ENCODE measurements at regions of chr10 and their contacts with region 1.

Region 1: DNA sequence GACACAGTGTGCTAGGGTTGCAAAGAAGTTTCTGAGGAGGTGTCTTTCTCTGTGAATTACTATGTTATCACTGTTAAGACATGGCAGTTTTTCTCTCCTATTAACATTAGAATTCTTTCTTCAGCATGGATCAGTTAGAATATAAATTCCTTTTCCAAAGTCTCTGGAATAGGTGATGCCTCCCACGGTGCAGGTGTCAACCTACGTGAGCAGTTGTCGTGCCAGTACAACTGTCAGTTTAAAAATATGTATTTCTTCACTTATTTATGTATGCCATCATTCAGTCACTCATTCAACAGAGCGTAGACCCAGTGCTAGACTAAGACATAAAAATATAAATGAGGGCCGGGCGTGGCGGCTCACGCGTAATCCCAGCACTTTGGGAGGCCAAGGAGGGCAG is 83.5 kb downstream of the TACC2 start:
- DNase-seq: no peak
- ATAC-seq: no peak
- H3K4me3 ChIP-seq: no peak overlapping the region
- H3K27ac ChIP-seq: peak overlapping the region; percentile 55
- H3K4me1 ChIP-seq: peaks cover 32% of the 10 kb centered on the region
- H3K27me3 ChIP-seq: no peaks in the 10 kb centered on the region
- CTCF ChIP-seq: no peak

Region 2: GRCh38 chr10:121823993-121824463 is 248.5 kb before region 1 on chr10:
- intact Hi-C with region 1: loop called in 1 of 2 experiments (anchors 5 kb)
- DNase-seq: no peak
- ATAC-seq: peak; percentile 72 to 91 (median 78)
- H3K4me3 ChIP-seq: no peak overlapping the region
- H3K27ac ChIP-seq: no peak overlapping the region
- H3K4me1 ChIP-seq: no peaks in the 10 kb centered on the region
- H3K27me3 ChIP-seq: no peaks in the 10 kb centered on the region
- CTCF ChIP-seq: peak; percentile 60